ENCODE measurements at regions of chr14 and their contacts with region 1.

Region 1: DNA sequence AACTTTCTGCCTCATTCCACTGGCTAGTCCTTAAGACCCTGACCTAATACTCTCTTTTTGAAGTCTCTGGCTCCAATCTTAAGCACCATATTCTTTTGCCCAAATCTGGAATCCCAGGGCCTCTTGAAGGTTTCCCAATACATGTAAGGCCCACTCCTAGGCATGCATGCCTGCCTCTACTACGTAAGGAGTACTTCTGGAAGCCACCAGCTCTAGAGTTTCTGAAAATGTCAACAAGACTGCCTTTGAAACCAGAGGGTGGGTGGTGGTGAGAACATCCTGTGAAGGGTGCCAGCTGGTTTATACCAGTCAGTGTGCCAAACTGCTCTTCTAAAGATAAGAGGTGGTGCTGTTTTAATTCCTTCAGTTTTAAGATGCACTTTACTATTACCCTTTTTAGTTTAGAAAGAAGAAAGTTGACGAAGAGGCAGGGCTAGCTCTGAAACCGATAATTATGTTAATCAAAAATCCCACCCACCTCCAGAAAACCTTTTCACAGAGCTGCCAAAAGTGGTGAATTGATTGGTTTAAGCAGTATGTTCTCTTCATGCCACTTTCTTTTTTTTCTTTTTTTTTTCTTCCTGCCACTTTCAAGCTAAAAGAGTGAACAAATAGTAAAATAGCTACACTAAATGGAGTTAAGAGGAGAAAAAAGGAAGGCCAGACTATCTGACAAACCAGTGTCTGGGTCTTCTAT is 8.7 kb upstream of the WDR89 start:
- DNase-seq: no peak
- ATAC-seq: no peak
- H3K4me3 ChIP-seq: no peak overlapping the region
- H3K27ac ChIP-seq: no peak overlapping the region
- H3K4me1 ChIP-seq: no peaks in the 10 kb centered on the region
- H3K27me3 ChIP-seq: no peaks in the 10 kb centered on the region
- CTCF ChIP-seq: no peak

Region 2: DNA sequence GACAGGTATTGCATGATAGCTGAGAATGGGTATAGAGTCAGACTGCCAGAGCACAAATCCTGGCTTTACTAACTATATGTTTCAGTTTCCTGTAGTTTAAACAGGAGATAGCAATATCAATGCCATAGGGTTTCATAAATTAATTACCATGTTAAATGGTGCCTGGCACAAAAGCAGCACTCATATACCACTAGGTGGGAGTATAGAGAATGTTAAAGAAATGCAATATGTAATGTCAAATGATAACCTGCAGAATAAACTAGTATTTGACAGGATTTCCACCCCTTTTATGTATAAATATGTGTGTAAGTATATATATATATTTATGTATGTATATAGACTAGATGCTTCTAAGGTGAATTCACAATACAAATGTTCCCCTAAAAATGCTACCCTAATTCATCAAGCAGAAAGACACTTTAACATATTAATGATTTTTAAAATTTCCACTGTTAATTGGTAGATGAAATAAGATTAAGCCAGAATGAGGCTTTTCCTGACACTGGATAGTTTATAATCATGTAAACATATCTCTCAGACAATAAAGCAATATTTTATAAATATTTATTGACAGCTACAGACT is 17.4 kb before region 1 on chr14:
- CTCF ChIA-PET with region 1: interaction called, 11 read pairs
- POLR2A ChIA-PET with region 1: no interaction called
- in situ Hi-C with region 1: no loop called
- intact Hi-C with region 1: no loop called
- DNase-seq: no peak
- ATAC-seq: peak; percentile 74; the same call in 1 of the 2 replicates
- H3K4me3 ChIP-seq: no peak overlapping the region
- H3K27ac ChIP-seq: no peak overlapping the region
- H3K4me1 ChIP-seq: no peaks in the 10 kb centered on the region
- H3K27me3 ChIP-seq: no peaks in the 10 kb centered on the region
- CTCF ChIP-seq: peak; percentile 45; the same call in 1 of the 2 replicates

Region 3: DNA sequence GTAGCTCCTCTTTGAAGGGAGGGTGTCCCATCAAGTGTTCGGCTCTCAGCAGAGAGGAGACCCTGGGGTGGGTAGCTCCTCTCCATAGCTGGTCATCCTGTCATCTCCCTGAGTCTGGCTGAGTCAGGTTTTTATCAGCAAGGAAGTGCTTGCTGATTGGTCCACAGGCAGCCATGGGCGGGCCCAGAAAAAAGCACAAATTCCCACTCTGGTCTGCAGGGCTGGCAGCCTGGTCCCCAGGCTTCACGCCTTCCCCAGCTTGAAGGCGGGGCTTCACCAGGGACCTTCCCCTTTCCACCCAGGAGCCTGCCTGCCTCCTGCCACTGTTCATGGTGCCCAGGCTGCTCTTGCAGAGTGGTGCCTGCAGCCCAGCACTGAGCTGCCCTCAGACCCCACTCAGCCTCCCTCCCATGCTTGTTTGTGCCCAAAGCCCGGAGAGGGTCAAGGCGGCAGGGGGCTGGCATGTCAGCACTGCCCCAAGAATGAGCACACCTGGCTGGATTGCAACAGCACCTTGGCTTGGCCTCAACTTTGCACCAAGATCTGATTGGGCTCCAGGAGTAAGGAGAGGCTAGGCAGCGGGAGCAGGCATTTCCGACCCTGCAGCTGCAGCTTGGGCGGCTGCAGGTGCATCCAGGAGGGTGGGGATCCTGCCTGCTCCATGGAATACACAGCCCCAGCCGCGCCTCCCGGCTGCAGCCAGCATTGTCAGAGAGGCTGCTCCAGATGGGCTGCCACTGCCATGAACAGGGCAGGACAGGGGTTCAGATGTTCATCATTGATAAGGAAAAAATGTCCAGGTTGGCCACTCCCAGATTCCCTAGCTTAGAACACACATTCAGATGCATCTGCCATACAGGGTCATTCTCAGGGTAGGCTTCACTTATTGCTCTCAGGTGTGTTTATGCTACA is 13.3 kb after region 1 on chr14:
- CTCF ChIA-PET with region 1: no interaction called
- POLR2A ChIA-PET with region 1: interaction called, 11 read pairs
- in situ Hi-C with region 1: no loop called
- intact Hi-C with region 1: no loop called
- DNase-seq: no peak
- ATAC-seq: peak; percentile 72
- H3K4me3 ChIP-seq: no peak overlapping the region
- H3K27ac ChIP-seq: no peak overlapping the region
- H3K4me1 ChIP-seq: no peaks in the 10 kb centered on the region
- H3K27me3 ChIP-seq: no peaks in the 10 kb centered on the region
- CTCF ChIP-seq: no peak

Region 4: DNA sequence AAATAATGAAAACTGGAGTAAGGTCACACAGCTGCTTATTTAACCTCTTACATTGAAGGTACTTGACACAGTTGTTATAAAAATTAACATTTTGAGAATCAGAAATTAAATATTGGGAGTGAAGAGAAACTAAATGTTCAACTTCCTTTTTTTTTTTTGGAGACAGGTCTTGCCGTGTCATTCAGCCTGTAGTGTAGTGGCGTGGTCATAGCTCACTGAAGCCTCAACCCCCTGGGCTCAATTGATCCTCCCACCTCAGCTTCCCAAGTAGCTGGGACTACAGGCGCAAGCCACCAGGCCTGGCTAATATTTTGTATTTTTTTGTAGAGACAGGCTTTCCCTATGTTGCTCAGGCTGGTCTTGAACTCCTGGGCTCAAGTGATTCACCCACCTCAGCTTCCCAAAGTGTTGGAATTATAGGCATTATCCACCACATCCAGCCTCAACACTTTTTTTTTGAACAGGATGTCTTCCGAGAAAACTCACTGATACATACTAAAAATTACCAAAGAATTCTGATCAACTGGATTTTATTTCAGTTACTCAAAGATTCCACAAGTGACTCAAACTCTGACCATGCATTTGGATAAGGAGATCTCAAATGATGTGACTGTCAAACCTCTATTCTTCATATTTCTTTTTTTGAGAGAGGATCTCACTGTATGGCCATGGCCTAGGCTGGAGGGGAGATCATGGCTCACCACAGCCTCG is 42.1 kb after region 1 on chr14:
- CTCF ChIA-PET with region 1: interaction called, 11 read pairs
- POLR2A ChIA-PET with region 1: no interaction called
- in situ Hi-C with region 1: no loop called
- intact Hi-C with region 1: no loop called
- DNase-seq: no peak
- ATAC-seq: no peak
- H3K4me3 ChIP-seq: no peak overlapping the region
- H3K27ac ChIP-seq: no peak overlapping the region
- H3K4me1 ChIP-seq: no peaks in the 10 kb centered on the region; the same call in 1 of the 2 replicates
- H3K27me3 ChIP-seq: no peaks in the 10 kb centered on the region
- CTCF ChIP-seq: no peak

Region 5: DNA sequence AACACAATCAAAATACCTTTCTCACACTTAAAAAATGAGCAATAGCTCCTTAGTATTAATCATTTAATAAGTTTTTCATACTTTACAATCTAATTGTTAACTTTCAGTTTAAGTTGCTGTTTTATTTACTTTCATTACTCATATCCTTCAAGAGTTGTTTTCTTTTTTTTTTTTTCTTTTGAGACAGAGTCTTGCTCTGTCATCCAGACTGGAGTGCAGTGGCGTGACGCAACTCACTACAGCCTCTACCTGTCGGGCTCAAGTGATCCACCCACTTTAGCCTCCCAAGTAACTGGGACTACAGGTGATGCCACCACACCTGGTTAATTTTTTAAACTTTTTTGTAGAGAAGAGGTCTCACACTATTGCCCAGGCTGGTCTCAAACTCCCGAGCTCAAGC is 870.3 kb after region 1 on chr14:
- CTCF ChIA-PET with region 1: no interaction called
- POLR2A ChIA-PET with region 1: interaction called, 11 read pairs
- in situ Hi-C with region 1: no loop called
- intact Hi-C with region 1: no loop called
- DNase-seq: no peak
- ATAC-seq: no peak
- H3K4me3 ChIP-seq: no peak overlapping the region
- H3K27ac ChIP-seq: no peak overlapping the region
- H3K4me1 ChIP-seq: no peaks in the 10 kb centered on the region
- H3K27me3 ChIP-seq: no peaks in the 10 kb centered on the region
- CTCF ChIP-seq: no peak